ENCODE measurements at regions of chr2 and their contacts with region 1.

Region 1: GRCh38 chr2:11829947-11830707 is 83.7 kb downstream of the LPIN1 start:
- DNase-seq: peak; percentile 89
- H3K4me3 Mint-ChIP-seq: peak overlapping the region; percentile 73
- H3K27ac Mint-ChIP-seq: peak overlapping the region; percentile 85
- H3K4me1 Mint-ChIP-seq: peaks cover 37% of the 10 kb centered on the region
- H3K27me3 Mint-ChIP-seq: peaks cover 37% of the 10 kb centered on the region

Region 2: GRCh38 chr2:12005886-12006681 is 176.0 kb after region 1 on chr2:
- intact Hi-C with region 1: loop called (anchors 2 kb)
- DNase-seq: peak; percentile 86
- H3K4me3 Mint-ChIP-seq: no peak overlapping the region
- H3K27ac Mint-ChIP-seq: no peak overlapping the region
- H3K4me1 Mint-ChIP-seq: peaks cover 8% of the 10 kb centered on the region
- H3K27me3 Mint-ChIP-seq: peaks cover 63% of the 10 kb centered on the region

Region 3: DNA sequence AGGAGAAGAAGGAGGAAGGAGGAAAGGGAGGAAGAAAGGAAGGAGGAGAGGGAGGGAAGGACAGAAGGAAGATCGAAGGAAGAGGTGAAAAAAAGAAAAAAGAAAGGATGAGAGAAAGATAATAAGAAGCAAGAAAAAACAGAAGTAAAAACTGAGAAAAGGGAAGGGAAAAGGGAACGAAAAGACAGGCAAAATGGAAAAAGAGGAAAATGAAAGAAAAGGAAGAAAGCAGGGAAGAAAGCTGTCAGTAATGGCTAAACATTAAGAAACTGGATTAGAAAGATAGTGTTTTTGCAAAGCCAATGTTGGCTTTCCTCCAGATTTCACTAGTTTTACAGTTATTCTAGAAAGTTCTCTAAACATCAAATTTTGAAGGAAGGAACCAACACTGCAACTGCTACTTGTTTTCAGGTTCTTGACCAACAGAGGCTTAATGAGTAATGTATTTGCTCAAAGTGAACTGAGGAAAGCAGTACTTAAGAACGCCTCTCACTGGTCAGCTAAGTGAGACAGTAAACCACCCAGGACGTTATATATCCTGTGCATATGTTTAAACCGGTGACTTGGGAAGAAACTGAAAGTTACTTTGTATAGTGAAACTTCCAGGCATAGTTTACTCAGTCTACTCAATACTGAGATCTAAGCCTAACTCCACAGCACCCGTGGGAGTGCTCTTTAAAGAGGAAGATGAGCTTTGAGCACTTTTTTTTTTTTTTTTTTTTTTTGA is 600.4 kb after region 1 on chr2:
- intact Hi-C with region 1: loop called (anchors 5 kb)
- DNase-seq: peak; percentile 75
- H3K4me3 Mint-ChIP-seq: peak overlapping the region; percentile 50
- H3K27ac Mint-ChIP-seq: peak overlapping the region; percentile 38
- H3K4me1 Mint-ChIP-seq: peaks cover 23% of the 10 kb centered on the region
- H3K27me3 Mint-ChIP-seq: no peaks in the 10 kb centered on the region

Region 4: GRCh38 chr2:12555012-12555645 is 725.0 kb after region 1 on chr2:
- intact Hi-C with region 1: loop called (anchors 2 kb)
- DNase-seq: peak; percentile 59
- H3K4me3 Mint-ChIP-seq: peak overlapping the region; percentile 57
- H3K27ac Mint-ChIP-seq: peak overlapping the region; percentile 88
- H3K4me1 Mint-ChIP-seq: peaks cover 39% of the 10 kb centered on the region
- H3K27me3 Mint-ChIP-seq: no peaks in the 10 kb centered on the region

Region 5: GRCh38 chr2:12931186-12931844 is 1101.2 kb after region 1 on chr2:
- intact Hi-C with region 1: loop called (anchors 10 kb)
- DNase-seq: peak; percentile 61
- H3K4me3 Mint-ChIP-seq: no peak overlapping the region
- H3K27ac Mint-ChIP-seq: no peak overlapping the region
- H3K4me1 Mint-ChIP-seq: peaks cover 11% of the 10 kb centered on the region
- H3K27me3 Mint-ChIP-seq: peaks cover 49% of the 10 kb centered on the region

Measured in activated CD4-positive, alpha-beta T cell treated with anti-CD3 and anti-CD28 coated beads, Interleukin-2, amount 10 ng/mL, durations not matched to agents 24 days and 14 days (primary cell).